HepG2 (cell line): ENCODE measurements at regions of chr6 and their contacts with region 1.

Region 1: GRCh38 chr6:52598123-52598823 is 21.4 kb upstream of the TRAM2 start:
- DNase-seq: peak; percentile 100
- ATAC-seq: peak; percentile 92
- H3K4me3 ChIP-seq: peak overlapping the region; percentile 42 to 73 (median 52); a peak in 5 of 6 replicates
- H3K27ac ChIP-seq: peak overlapping the region; percentile 98
- H3K4me1 ChIP-seq: peaks cover 81% of the 10 kb centered on the region
- H3K27me3 ChIP-seq: no peaks in the 10 kb centered on the region
- CTCF ChIP-seq: peak; percentile 96
- EP300 ChIP-seq: peak; percentile 77 to 91
- POLR2A ChIP-seq: peak; percentile 57 to 95; a peak in 3 of 4 replicates
- RAD21 ChIP-seq: peak; percentile 91

Region 2: DNA sequence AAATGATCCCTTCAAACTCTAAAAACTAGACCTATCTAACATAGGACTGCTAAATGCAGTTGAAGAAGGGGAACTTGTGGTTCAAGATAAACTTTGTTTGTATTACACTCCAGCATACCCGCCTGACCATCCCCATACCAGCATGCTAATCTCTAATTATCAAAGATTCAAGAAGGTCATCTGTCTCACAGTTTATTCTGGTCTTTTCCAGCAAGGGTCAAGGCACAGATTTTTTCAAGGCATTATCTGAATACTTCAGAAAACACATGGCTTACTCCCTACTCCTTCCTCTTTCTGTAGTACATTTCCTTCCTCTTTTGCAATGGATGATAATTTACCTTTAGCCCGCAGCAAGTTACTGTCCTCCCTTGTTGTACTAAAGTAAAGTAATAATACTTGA is 685.0 kb before region 1 on chr6:
- CTCF ChIA-PET with region 1: no interaction called
- POLR2A ChIA-PET with region 1: no interaction called
- in situ Hi-C with region 1: no loop called
- intact Hi-C with region 1: no loop called
- DNase-seq: no peak
- ATAC-seq: no peak
- H3K4me3 ChIP-seq: no peak overlapping the region
- H3K27ac ChIP-seq: no peak overlapping the region
- H3K4me1 ChIP-seq: no peaks in the 10 kb centered on the region
- H3K27me3 ChIP-seq: no peaks in the 10 kb centered on the region; a peak in 1 of 5 replicates
- CTCF ChIP-seq: no peak
- EP300 ChIP-seq: no peak
- POLR2A ChIP-seq: no peak
- RAD21 ChIP-seq: no peak

Region 3: GRCh38 chr6:52284460-52285176 is 313.7 kb before region 1 on chr6 and contains the start of gene MCM3:
- CTCF ChIA-PET with region 1: no interaction called
- POLR2A ChIA-PET with region 1: no interaction called
- in situ Hi-C with region 1: no loop called
- intact Hi-C with region 1: loop called (anchors 5 kb)
- DNase-seq: peak; percentile 100
- ATAC-seq: peak; percentile 99
- H3K4me3 ChIP-seq: peak within 1 kb of the TSS; percentile 80 to 94 (median 90)
- H3K27ac ChIP-seq: peak within 1 kb of the TSS; percentile 86
- H3K4me1 ChIP-seq: peaks cover 67% of the 10 kb centered on the region
- H3K27me3 ChIP-seq: no peaks in the 10 kb centered on the region; a peak in 1 of 5 replicates
- CTCF ChIP-seq: peak; percentile 14; the same call in 1 of the 2 replicates
- EP300 ChIP-seq: peak in 1 of 2 experiments; percentile 15; a peak in 1 of 4 replicates
- POLR2A ChIP-seq: peak; percentile 71 to 94
- RAD21 ChIP-seq: peak; percentile 69
- total RNA-seq, gene MCM3: 288 and 336 TPM in 2 replicates

Region 4: GRCh38 chr6:52517502-52518278 is 80.6 kb before region 1 on chr6:
- CTCF ChIA-PET with region 1: no interaction called
- POLR2A ChIA-PET with region 1: interaction called, 6 read pairs
- in situ Hi-C with region 1: no loop called
- intact Hi-C with region 1: loop called (anchors 1 kb)
- DNase-seq: peak; percentile 92
- ATAC-seq: peak; percentile 92
- H3K4me3 ChIP-seq: peak overlapping the region; percentile 10 to 52 (median 26); a peak in 5 of 6 replicates
- H3K27ac ChIP-seq: peak overlapping the region; percentile 73
- H3K4me1 ChIP-seq: peaks cover 74% of the 10 kb centered on the region
- H3K27me3 ChIP-seq: no peaks in the 10 kb centered on the region
- CTCF ChIP-seq: peak; percentile 26; the same call in 1 of the 2 replicates
- EP300 ChIP-seq: peak in 1 of 2 experiments; percentile 64; a peak in 2 of 4 replicates
- POLR2A ChIP-seq: peak; percentile 40 to 44; a peak in 1 of 4 replicates
- RAD21 ChIP-seq: no peak

Region 5: DNA sequence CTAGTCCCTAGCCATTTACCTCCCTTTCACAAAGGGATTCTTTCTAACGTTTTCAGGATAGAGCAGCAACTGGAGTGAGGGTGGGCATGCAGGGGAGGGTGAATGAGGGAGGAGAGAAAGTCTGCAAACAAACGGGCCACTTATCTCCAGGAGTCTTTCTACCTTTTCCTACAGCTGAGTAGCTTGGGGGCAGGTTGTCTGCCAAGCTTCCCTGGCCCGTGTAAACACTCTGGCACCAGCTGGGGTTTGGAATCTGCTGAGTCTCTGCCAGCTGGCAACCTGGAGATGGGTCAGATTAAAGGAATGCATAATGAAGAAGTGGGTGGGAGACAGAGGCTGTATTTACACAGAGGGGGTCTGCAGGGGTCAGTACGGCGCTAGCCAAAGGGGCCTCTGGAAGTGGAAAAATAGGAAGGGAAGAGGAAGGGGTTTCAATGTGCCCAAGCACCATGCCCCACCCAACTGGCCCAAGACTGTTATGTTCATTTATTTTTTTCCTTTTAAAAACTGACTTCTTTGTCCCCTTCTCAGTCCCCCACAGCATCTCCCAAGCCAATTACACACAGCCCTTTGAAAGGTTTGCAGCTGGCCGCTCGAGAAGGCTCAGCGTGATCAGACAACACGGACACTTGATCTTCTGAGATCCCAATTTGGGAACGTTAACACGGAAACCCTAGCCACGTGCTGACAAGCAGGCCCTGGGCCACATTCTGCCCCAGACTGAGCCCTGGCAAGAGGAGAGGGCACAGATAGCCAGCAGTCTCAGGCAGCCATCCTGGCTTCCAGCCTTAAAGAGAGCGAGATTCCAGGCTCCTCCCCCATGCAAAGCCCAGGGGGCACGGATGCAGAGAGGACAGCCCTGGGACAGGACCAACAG is 46.6 kb before region 1 on chr6:
- CTCF ChIA-PET with region 1: no interaction called
- POLR2A ChIA-PET with region 1: interaction called, 28 read pairs
- in situ Hi-C with region 1: no loop called
- intact Hi-C with region 1: loop called (anchors 1 kb)
- DNase-seq: peak; percentile 77
- ATAC-seq: peak; percentile 16
- H3K4me3 ChIP-seq: no peak overlapping the region
- H3K27ac ChIP-seq: peak overlapping the region; percentile 3
- H3K4me1 ChIP-seq: peaks cover 81% of the 10 kb centered on the region
- H3K27me3 ChIP-seq: no peaks in the 10 kb centered on the region
- CTCF ChIP-seq: no peak
- EP300 ChIP-seq: peak in 1 of 2 experiments; percentile 17; a peak in 1 of 4 replicates
- POLR2A ChIP-seq: no peak
- RAD21 ChIP-seq: no peak

Region 6: GRCh38 chr6:52647199-52647598 is 48.9 kb after region 1 on chr6:
- CTCF ChIA-PET with region 1: no interaction called
- POLR2A ChIA-PET with region 1: interaction called, 15 read pairs
- in situ Hi-C with region 1: no loop called
- intact Hi-C with region 1: loop called (anchors 1 kb)
- DNase-seq: no peak
- ATAC-seq: no peak
- H3K4me3 ChIP-seq: no peak overlapping the region
- H3K27ac ChIP-seq: no peak overlapping the region
- H3K4me1 ChIP-seq: peaks cover 30% of the 10 kb centered on the region
- H3K27me3 ChIP-seq: peaks cover 0 to 37% of the 10 kb centered on the region in 2 experiments; a peak in 3 of 5 replicates
- CTCF ChIP-seq: no peak
- EP300 ChIP-seq: no peak
- POLR2A ChIP-seq: no peak
- RAD21 ChIP-seq: no peak